HCT116 (cell line): ENCODE measurements at regions of chr14 and their contacts with region 1.

Region 1: DNA sequence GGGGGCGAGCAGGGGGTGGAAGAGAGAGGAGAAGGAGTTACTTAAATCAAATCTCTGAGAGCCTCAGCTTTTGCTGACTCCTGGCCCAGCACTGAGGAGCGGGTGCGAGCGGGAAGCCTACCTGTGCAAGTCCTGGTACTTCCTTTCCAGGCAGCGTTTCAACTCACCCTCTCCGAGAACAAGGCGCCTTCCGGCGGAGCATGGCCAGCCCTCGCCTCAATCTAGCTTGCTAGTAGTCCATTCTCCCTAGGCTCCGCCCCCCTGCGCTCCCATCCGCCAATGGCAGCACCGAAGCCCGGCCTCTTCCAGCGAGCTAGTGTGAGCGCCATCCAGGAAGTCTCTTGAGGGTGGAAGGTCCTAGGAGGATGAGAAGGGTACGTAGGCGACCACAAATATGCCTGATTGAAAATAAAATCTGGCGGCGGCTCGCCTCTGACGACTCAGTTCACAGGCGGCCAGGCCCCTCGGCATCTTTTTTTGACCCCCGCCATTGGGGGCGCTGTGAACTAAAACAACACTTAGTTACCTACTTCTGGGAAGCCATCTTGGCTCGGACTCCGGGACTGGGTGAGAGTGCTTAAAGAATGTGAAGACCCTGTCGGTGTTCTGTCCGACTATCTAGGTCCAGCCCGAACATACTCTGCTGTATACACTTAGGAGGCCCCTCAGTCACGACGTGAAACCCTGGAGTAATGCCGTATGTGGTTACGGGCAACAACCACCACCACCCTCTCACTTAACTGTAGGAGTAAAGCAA is at the start of gene CHD8:
- DNase-seq: peak; percentile 99
- ATAC-seq: peak; percentile 98
- H3K4me3 ChIP-seq: peak within 1 kb of the TSS; percentile 87 to 97
- H3K27ac ChIP-seq: peak within 1 kb of the TSS; percentile 93
- H3K4me1 ChIP-seq: peaks cover 10 to 16% of the 10 kb centered on the region in 2 experiments; a peak in 3 of 4 replicates
- H3K27me3 ChIP-seq: no peaks in the 10 kb centered on the region
- CTCF ChIP-seq: peak; percentile 57 to 79 (median 62)
- POLR2A ChIP-seq: peak; percentile 57
- RAD21 ChIP-seq: peak; percentile 41; the same call in 1 of the 2 replicates
- total RNA-seq, gene CHD8: 46.8 TPM

Region 2: DNA sequence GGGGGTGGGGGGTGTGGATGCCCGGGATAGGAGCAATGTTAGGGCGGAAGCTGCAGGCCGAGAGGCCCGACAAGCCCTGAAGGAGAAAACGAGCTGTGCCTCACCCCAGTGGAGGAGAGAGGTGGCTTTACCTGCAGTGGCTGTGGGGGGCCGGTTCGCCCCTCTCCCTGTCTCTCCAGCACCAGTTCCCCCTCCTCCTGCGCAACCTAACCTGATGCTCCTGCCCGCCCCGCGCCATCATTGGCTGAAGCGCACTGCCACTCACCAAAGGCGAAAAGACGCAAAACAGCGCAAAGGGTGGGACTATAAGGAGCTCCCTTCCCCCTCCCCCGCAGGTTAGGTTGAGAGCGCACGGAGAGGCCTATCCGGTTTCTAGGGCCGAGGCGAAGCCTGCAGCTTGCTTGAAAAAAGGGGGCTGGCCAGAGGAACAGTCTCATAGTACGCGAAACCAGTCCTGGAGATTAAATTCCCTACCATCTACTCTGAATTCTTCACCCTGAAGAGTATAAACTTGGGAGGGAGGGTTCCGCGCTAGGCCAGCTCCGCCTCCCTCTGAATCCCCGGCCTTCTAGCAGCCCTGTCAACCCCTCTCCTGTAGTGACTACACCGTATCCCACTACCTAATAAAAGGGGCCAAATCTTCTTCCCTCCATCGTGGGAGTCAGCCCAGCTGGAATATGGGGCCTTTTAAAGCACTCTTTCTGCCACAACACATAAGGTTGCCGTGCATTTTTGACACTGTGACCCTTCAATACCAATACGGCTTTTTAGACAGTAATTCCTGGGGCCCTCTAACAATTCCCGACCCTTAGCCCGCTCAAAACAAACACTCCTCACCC is 18.8 kb before region 1 on chr14:
- CTCF ChIA-PET with region 1: interaction called, 23 read pairs
- POLR2A ChIA-PET with region 1: interaction called, 34 read pairs
- RAD21 ChIA-PET with region 1: interaction called in 1 of 2 experiments, 4 read pairs
- intact Hi-C with region 1: loop called (anchors 1 kb)
- DNase-seq: peak; percentile 97
- ATAC-seq: peak; percentile 99
- H3K4me3 ChIP-seq: peak overlapping the region; percentile 62 to 64
- H3K27ac ChIP-seq: peak overlapping the region; percentile 61
- H3K4me1 ChIP-seq: peaks cover 11 to 12% of the 10 kb centered on the region in 2 experiments; a peak in 3 of 4 replicates
- H3K27me3 ChIP-seq: no peaks in the 10 kb centered on the region
- CTCF ChIP-seq: no peak
- POLR2A ChIP-seq: no peak
- RAD21 ChIP-seq: no peak